ENCODE measurements at regions of chr1 and their contacts with region 1.

Region 1: GRCh38 chr1:69737527-69738185 is 169.9 kb downstream of the LRRC7 start:
- DNase-seq: peak; percentile 77
- H3K4me3 Mint-ChIP-seq: no peak overlapping the region
- H3K27ac Mint-ChIP-seq: no peak overlapping the region
- H3K4me1 Mint-ChIP-seq: no peaks in the 10 kb centered on the region
- H3K27me3 Mint-ChIP-seq: peaks cover 87% of the 10 kb centered on the region
- CTCF ChIP-seq: peak; percentile 55

Region 2: GRCh38 chr1:68470388-68470970 is 1267.2 kb before region 1 on chr1:
- CTCF ChIA-PET with region 1: interaction called, 63 read pairs
- POLR2A ChIA-PET with region 1: no interaction called
- intact Hi-C with region 1: loop called (anchors 1 kb)
- DNase-seq: peak; percentile 23
- H3K4me3 Mint-ChIP-seq: no peak overlapping the region
- H3K27ac Mint-ChIP-seq: no peak overlapping the region
- H3K4me1 Mint-ChIP-seq: no peaks in the 10 kb centered on the region
- H3K27me3 Mint-ChIP-seq: no peaks in the 10 kb centered on the region
- CTCF ChIP-seq: peak; percentile 65

Region 3: GRCh38 chr1:68571454-68572235 is 1166.0 kb before region 1 on chr1:
- CTCF ChIA-PET with region 1: interaction called, 21 read pairs
- POLR2A ChIA-PET with region 1: no interaction called
- intact Hi-C with region 1: no loop called
- DNase-seq: peak; percentile 30
- H3K4me3 Mint-ChIP-seq: no peak overlapping the region
- H3K27ac Mint-ChIP-seq: no peak overlapping the region
- H3K4me1 Mint-ChIP-seq: no peaks in the 10 kb centered on the region
- H3K27me3 Mint-ChIP-seq: peaks cover 65% of the 10 kb centered on the region
- CTCF ChIP-seq: no peak

Region 4: DNA sequence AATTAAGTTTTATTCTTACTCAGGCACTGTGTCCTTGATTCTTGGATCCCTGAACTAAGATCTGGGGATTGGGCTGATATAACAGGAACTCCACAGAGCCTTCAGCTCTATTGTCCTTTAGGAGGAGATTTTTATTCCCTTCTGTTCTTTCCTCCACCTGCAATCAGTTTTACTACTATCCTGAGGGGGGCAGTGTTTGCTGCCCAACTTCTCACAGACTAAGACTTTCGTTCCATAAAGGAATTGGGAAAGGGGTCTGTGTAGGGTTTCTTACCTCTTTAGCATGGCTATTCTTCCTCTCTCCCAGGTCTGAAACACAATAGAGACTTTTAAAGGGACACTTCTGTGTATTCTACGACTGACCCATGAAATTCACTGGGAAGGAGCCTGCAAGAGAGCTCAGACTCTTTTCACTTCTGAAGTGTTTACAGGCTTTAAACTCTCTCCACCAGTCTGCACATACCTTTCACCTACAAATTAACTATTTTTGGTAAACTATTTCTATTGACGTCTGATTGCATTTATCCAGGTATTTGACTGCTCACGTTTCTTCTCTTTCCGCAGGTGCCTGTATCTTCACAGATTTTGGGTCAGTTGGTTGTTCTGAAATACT is 1137.5 kb before region 1 on chr1:
- CTCF ChIA-PET with region 1: interaction called, 6 read pairs
- POLR2A ChIA-PET with region 1: no interaction called
- intact Hi-C with region 1: loop called (anchors 5 kb)
- DNase-seq: peak; percentile 50
- H3K4me3 Mint-ChIP-seq: no peak overlapping the region
- H3K27ac Mint-ChIP-seq: no peak overlapping the region
- H3K4me1 Mint-ChIP-seq: no peaks in the 10 kb centered on the region
- H3K27me3 Mint-ChIP-seq: peaks cover 39% of the 10 kb centered on the region
- CTCF ChIP-seq: peak; percentile 48

Region 5: GRCh38 chr1:68819190-68819829 is 918.3 kb before region 1 on chr1:
- CTCF ChIA-PET with region 1: interaction called, 23 read pairs
- POLR2A ChIA-PET with region 1: no interaction called
- intact Hi-C with region 1: loop called (anchors 1 kb)
- DNase-seq: peak; percentile 35
- H3K4me3 Mint-ChIP-seq: no peak overlapping the region
- H3K27ac Mint-ChIP-seq: no peak overlapping the region
- H3K4me1 Mint-ChIP-seq: no peaks in the 10 kb centered on the region
- H3K27me3 Mint-ChIP-seq: peaks cover 19% of the 10 kb centered on the region
- CTCF ChIP-seq: peak; percentile 31

Region 6: DNA sequence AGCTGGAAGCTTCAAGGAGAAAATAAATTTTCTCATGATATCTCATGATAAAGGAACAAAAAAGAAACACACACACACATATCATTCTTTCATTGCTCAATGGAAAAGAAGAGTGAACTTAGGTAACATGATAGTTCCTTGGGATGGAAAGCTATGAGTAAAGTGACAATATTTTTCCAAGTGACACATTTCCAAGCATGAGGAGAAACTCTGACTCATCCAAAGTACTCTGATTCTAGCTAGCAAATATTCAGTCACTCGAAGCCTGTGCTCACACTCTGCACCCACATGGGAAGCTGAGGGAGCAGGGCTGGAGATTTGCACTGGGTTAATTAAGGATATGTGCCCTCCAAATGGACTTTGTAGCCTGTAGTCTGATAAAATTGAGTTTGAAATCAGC is 245.3 kb after region 1 on chr1:
- CTCF ChIA-PET with region 1: no interaction called
- POLR2A ChIA-PET with region 1: no interaction called
- intact Hi-C with region 1: no loop called
- DNase-seq: no peak
- H3K4me3 Mint-ChIP-seq: no peak overlapping the region
- H3K27ac Mint-ChIP-seq: no peak overlapping the region
- H3K4me1 Mint-ChIP-seq: no peaks in the 10 kb centered on the region
- H3K27me3 Mint-ChIP-seq: peaks cover 61% of the 10 kb centered on the region
- CTCF ChIP-seq: no peak